ENCODE measurements at regions of chr21 and their contacts with region 1.

Region 1: DNA sequence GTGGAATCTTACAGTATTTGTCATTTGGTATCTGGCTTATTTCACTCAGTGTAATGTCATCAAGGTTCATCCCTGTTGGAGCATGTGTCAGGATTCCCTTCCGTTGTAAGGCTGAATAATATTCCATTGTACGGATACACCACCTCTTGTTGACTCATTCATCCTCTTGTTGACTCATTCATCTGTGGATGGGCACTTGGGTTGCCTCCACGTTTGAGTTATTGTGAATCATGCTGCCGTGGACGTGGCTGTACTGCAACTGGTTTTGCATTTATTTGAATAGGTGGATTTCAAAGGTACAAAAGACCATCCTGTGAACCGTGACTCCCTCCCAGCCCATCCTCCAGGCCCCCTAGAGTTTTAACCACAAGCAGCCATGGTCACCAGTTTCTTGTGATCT is 11.9 kb upstream of the TCP10L start:
- DNase-seq: peak; percentile 98
- ATAC-seq: peak; percentile 95
- H3K4me3 ChIP-seq: no peak overlapping the region
- H3K27ac ChIP-seq: peak overlapping the region; percentile 80
- H3K4me1 ChIP-seq: peaks cover 12% of the 10 kb centered on the region
- H3K27me3 ChIP-seq: no peaks in the 10 kb centered on the region
- CTCF ChIP-seq: no peak

Region 2: DNA sequence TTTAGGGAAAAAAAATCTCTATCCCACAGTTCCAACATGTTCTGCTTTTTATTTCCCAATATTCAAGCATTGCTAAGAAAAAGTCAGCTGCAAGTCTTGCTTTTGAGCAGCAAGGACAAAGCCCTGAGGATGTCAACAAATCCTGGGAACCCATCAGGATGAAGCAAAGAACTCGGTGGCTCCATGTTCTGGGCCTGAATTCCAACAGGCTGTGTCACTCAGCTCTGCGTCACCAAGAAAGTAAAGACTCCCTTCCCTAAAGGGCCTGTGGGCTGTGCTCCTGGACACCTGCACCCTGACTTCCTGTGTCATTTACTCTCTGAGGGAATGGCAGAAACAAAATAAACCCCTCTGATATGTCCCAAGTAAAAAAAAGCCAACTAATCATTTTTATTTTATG is 1348.6 kb before region 1 on chr21:
- CTCF ChIA-PET with region 1: no interaction called
- POLR2A ChIA-PET with region 1: no interaction called
- intact Hi-C with region 1: no loop called
- DNase-seq: peak; percentile 84
- ATAC-seq: peak; percentile 96
- H3K4me3 ChIP-seq: no peak overlapping the region
- H3K27ac ChIP-seq: 0 out of 2 replicates have a peak overlapping the region, but pooled peaks have one; percentile 14
- H3K4me1 ChIP-seq: peaks cover 12% of the 10 kb centered on the region
- H3K27me3 ChIP-seq: no peaks in the 10 kb centered on the region
- CTCF ChIP-seq: no peak

Region 3: GRCh38 chr21:32257962-32258785 is 339.0 kb before region 1 on chr21:
- CTCF ChIA-PET with region 1: interaction called, 10 read pairs
- POLR2A ChIA-PET with region 1: no interaction called
- intact Hi-C with region 1: no loop called
- DNase-seq: peak; percentile 89
- ATAC-seq: peak; percentile 92
- H3K4me3 ChIP-seq: no peak overlapping the region
- H3K27ac ChIP-seq: no peak overlapping the region
- H3K4me1 ChIP-seq: peaks cover 14% of the 10 kb centered on the region
- H3K27me3 ChIP-seq: peaks cover 7% of the 10 kb centered on the region; the same call in 1 of the 2 replicates
- CTCF ChIP-seq: peak; percentile 92

Region 4: DNA sequence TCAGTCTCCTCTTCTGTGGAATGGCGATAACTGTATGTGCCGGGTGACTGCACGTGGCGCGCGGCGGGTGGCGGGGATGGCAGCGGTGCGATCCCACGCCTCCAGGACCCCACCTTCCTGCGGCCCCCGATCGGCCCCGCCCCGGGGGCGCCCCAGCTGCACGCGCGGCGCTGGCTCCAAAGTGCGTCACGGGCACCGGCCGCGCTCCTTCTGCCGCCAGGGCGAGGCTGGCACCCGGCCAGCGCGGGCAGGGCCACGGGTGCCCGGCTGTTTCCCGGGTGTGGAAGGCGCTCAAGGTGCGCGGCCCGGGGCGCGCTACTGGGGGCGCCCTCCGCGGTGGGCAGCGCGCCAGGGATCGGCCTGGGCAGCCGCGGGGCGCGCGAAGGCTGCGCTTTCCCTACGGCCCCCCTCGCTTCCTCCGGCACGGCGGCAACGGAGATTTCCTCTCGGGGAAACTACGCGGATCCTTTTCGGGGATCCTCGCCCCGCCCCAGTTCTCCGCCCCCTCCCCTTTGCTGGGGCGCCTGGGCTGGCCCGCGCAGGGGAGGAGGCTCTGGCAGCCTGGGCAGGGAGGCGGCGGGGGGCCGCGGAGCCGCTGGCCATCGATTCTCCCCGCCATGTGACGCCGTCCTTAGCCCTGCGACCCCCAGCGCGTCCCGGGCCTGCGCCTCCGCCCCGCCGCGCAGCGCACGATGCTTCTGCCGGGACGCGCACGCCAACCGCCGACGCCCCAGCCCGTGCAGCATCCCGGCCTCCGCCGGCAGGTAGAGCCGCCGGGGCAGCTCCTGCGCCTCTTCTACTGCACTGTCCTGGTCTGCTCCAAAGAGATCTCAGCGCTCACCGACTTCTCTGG is 184.8 kb before region 1 on chr21 and contains the start of gene EVA1C:
- CTCF ChIA-PET with region 1: interaction called, 24 read pairs
- POLR2A ChIA-PET with region 1: interaction called, 5 read pairs
- intact Hi-C with region 1: loop called (anchors 1 kb)
- DNase-seq: peak; percentile 71
- ATAC-seq: peak; percentile 54
- H3K4me3 ChIP-seq: peak within 1 kb of the TSS; percentile 90
- H3K27ac ChIP-seq: peak within 1 kb of the TSS; percentile 65
- H3K4me1 ChIP-seq: peaks cover 28% of the 10 kb centered on the region
- H3K27me3 ChIP-seq: no peaks in the 10 kb centered on the region
- CTCF ChIP-seq: no peak
- total RNA-seq, gene EVA1C: 16.1 and 17.5 TPM in 2 replicates

Region 5: GRCh38 chr21:32494934-32495703 is 102.1 kb before region 1 on chr21:
- CTCF ChIA-PET with region 1: interaction called, 7 read pairs
- POLR2A ChIA-PET with region 1: interaction called, 5 read pairs
- intact Hi-C with region 1: loop called (anchors 5 kb)
- DNase-seq: peak; percentile 89
- ATAC-seq: peak; percentile 96
- H3K4me3 ChIP-seq: peak overlapping the region; percentile 10; the same call in 1 of the 2 replicates
- H3K27ac ChIP-seq: peak overlapping the region; percentile 94
- H3K4me1 ChIP-seq: peaks cover 34% of the 10 kb centered on the region
- H3K27me3 ChIP-seq: no peaks in the 10 kb centered on the region
- CTCF ChIP-seq: no peak

Region 6: GRCh38 chr21:32507342-32507919 is 89.8 kb before region 1 on chr21:
- CTCF ChIA-PET with region 1: no interaction called
- POLR2A ChIA-PET with region 1: no interaction called
- intact Hi-C with region 1: no loop called
- DNase-seq: no peak
- ATAC-seq: no peak
- H3K4me3 ChIP-seq: no peak overlapping the region
- H3K27ac ChIP-seq: no peak overlapping the region
- H3K4me1 ChIP-seq: no peaks in the 10 kb centered on the region
- H3K27me3 ChIP-seq: no peaks in the 10 kb centered on the region
- CTCF ChIP-seq: no peak

Region 7: GRCh38 chr21:32554832-32555436 is 42.3 kb before region 1 on chr21:
- CTCF ChIA-PET with region 1: no interaction called
- POLR2A ChIA-PET with region 1: no interaction called
- intact Hi-C with region 1: no loop called
- DNase-seq: no peak
- ATAC-seq: no peak
- H3K4me3 ChIP-seq: no peak overlapping the region
- H3K27ac ChIP-seq: no peak overlapping the region
- H3K4me1 ChIP-seq: no peaks in the 10 kb centered on the region
- H3K27me3 ChIP-seq: no peaks in the 10 kb centered on the region
- CTCF ChIP-seq: no peak

Region 8: GRCh38 chr21:32569261-32570230 is 27.7 kb before region 1 on chr21:
- CTCF ChIA-PET with region 1: interaction called, 17 read pairs
- POLR2A ChIA-PET with region 1: no interaction called
- intact Hi-C with region 1: no loop called
- DNase-seq: peak; percentile 88
- ATAC-seq: peak; percentile 94
- H3K4me3 ChIP-seq: peak overlapping the region; percentile 81
- H3K27ac ChIP-seq: peak overlapping the region; percentile 85
- H3K4me1 ChIP-seq: peaks cover 11% of the 10 kb centered on the region
- H3K27me3 ChIP-seq: no peaks in the 10 kb centered on the region
- CTCF ChIP-seq: peak; percentile 91

Measured in PC-3 (cell line).